K562 (cell line): ENCODE measurements at regions of chr6 and their contacts with region 1.

Region 1: GRCh38 chr6:105484238-105485161 is 81.6 kb upstream of the PREP start:
- DNase-seq: peak; percentile 25 to 31 (median 28)
- ATAC-seq: peak; percentile 76
- H3K4me3 ChIP-seq: no peak overlapping the region
- H3K27ac ChIP-seq: no peak overlapping the region
- H3K4me1 ChIP-seq: no peaks in the 10 kb centered on the region; a peak in 2 of 5 replicates
- H3K27me3 ChIP-seq: peaks cover 2 to 4% of the 10 kb centered on the region in 2 experiments; a peak in 1 of 5 replicates
- CTCF ChIP-seq: peak; percentile 61 to 90 (median 67); a peak in 5 of 6 replicates
- EP300 ChIP-seq: no peak
- POLR2A ChIP-seq: no peak
- RAD21 ChIP-seq: peak; percentile 90 to 91

Region 2: DNA sequence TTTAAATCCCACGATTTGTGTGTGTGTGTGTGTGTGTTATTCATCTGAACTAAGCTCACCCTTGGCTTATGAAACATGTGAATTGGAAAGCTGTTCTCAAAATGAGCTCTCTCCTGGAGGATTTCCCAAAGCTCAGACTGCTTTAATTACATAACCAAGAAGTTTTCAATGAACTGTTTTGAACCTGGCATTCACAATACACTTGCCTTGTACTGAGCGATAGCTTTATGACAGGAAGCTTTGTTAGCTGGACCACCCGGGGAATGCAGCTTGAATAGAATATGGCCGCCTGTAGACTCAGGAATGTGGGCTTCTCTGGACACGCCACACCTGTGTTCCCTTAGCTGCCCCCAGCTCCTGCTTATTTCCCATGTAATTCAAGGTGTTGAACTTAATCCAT is 10.3 kb before region 1 on chr6:
- CTCF ChIA-PET with region 1: no interaction called
- POLR2A ChIA-PET with region 1: no interaction called
- in situ Hi-C with region 1: no loop called
- intact Hi-C with region 1: no loop called
- DNase-seq: no peak
- ATAC-seq: no peak
- H3K4me3 ChIP-seq: no peak overlapping the region
- H3K27ac ChIP-seq: no peak overlapping the region
- H3K4me1 ChIP-seq: no peaks in the 10 kb centered on the region
- H3K27me3 ChIP-seq: no peaks in the 10 kb centered on the region; a peak in 2 of 5 replicates
- CTCF ChIP-seq: no peak
- EP300 ChIP-seq: no peak
- POLR2A ChIP-seq: no peak
- RAD21 ChIP-seq: no peak

Region 3: GRCh38 chr6:105932440-105932839 is 447.9 kb after region 1 on chr6:
- CTCF ChIA-PET with region 1: no interaction called
- POLR2A ChIA-PET with region 1: no interaction called
- in situ Hi-C with region 1: no loop called
- intact Hi-C with region 1: loop called (anchors 10 kb)
- DNase-seq: no peak
- ATAC-seq: no peak
- H3K4me3 ChIP-seq: no peak overlapping the region
- H3K27ac ChIP-seq: no peak overlapping the region
- H3K4me1 ChIP-seq: no peaks in the 10 kb centered on the region
- H3K27me3 ChIP-seq: peaks cover 15 to 25% of the 10 kb centered on the region in 2 experiments
- CTCF ChIP-seq: no peak
- EP300 ChIP-seq: no peak
- POLR2A ChIP-seq: no peak
- RAD21 ChIP-seq: no peak

Region 4: DNA sequence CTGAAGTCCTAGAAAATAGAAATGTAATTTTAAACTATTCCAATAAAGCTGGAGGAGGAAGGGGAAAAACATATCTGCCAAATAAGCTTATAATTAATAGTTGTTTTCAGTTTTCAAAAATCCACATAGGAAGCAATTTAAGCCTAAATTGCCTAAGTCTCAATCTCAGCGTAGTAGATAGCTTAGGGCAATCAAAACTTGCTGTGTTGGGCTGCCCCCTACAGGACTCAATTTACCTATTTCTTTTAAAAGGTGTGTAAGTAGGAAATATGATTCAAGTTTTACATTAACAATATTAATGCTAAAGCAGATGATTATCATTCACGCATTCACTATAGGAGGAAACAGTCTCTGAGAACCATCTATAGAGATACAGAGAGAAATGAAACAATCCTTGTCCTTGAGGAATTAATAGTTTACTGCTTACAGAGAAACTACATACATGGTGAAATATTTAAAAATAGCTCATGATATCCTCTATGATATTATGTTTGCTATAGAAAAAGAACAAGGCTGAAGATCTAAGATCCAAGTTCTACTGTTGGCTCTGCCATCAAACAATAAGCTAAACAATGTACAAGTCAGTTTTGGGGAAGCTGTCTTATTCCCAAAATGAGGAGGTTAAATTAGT is 738.9 kb after region 1 on chr6:
- CTCF ChIA-PET with region 1: interaction called, 3 read pairs
- POLR2A ChIA-PET with region 1: no interaction called
- in situ Hi-C with region 1: no loop called
- intact Hi-C with region 1: loop called (anchors 5 kb)
- DNase-seq: peak; percentile 13 to 71 (median 30)
- ATAC-seq: peak; percentile 81
- H3K4me3 ChIP-seq: no peak overlapping the region
- H3K27ac ChIP-seq: no peak overlapping the region
- H3K4me1 ChIP-seq: peaks cover 0 to 5% of the 10 kb centered on the region in 2 experiments; a peak in 1 of 5 replicates
- H3K27me3 ChIP-seq: no peaks in the 10 kb centered on the region
- CTCF ChIP-seq: peak in 2 of 3 experiments; percentile 61 to 80; a peak in 5 of 6 replicates
- EP300 ChIP-seq: no peak
- POLR2A ChIP-seq: no peak
- RAD21 ChIP-seq: peak; percentile 86 to 88

Region 5: GRCh38 chr6:106300944-106301343 is 816.4 kb after region 1 on chr6:
- CTCF ChIA-PET with region 1: interaction called, 3 read pairs
- POLR2A ChIA-PET with region 1: no interaction called
- in situ Hi-C with region 1: no loop called
- intact Hi-C with region 1: loop called (anchors 10 kb)
- DNase-seq: peak in 2 of 4 experiments; percentile 17 to 38
- ATAC-seq: peak; percentile 72
- H3K4me3 ChIP-seq: no peak overlapping the region
- H3K27ac ChIP-seq: no peak overlapping the region
- H3K4me1 ChIP-seq: no peaks in the 10 kb centered on the region
- H3K27me3 ChIP-seq: no peaks in the 10 kb centered on the region
- CTCF ChIP-seq: peak in 2 of 3 experiments; percentile 35 to 55; a peak in 4 of 6 replicates
- EP300 ChIP-seq: no peak
- POLR2A ChIP-seq: no peak
- RAD21 ChIP-seq: peak; percentile 64 to 70